ENCODE measurements at regions of chr10 and their contacts with region 1.

Region 1: DNA sequence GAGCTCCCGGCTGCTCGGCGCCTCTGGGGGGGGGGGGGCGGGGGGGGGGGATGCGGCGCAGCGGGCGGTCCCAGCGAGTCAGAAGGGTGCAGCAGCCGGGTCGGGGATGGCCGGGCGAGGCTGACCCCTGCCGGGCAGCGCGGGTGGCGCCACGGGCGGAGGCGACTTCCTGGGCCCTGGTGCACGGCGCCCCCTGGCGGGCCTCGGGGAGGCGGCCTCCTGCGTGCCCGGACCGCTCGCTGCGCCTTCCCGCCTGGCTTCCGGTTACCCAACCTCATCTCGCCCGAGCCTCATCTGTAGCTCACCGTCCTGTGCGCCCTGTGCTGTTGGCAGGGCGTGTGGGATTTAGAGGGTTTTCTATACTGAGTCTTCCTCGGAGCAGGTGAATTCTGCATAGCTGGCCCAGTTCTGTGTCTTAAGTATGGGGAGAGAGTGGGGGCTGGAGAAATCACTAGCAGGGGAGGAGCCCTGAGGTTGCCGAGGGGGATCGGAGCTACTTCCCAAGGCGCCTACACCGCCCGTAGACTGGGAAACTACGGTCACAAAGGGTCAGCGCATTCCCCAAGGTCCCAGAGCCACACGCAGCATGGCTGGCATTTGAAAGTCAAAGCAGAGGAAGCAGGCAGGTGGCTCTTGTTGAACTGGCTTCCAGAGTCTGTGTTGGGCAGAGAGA is 28.3 kb upstream of the WDFY4 start:
- DNase-seq: peak; percentile 89 to 90
- ATAC-seq: peak; percentile 96 to 98 (median 97)
- H3K4me3 ChIP-seq: peak overlapping the region; percentile 24
- H3K4me3 Mint-ChIP-seq: peak overlapping the region; percentile 86
- H3K27ac ChIP-seq: no peak overlapping the region
- H3K27ac Mint-ChIP-seq: peak overlapping the region in 1 of 2 donors; percentile 27
- H3K4me1 ChIP-seq: peaks cover 17% of the 10 kb centered on the region
- H3K4me1 Mint-ChIP-seq: peaks cover 11% of the 10 kb centered on the region in 2 donors
- H3K27me3 ChIP-seq: peaks cover 8% of the 10 kb centered on the region
- H3K27me3 Mint-ChIP-seq: peaks cover 17 to 34% of the 10 kb centered on the region in 2 donors
- CTCF ChIP-seq: peak; percentile 85

Region 2: DNA sequence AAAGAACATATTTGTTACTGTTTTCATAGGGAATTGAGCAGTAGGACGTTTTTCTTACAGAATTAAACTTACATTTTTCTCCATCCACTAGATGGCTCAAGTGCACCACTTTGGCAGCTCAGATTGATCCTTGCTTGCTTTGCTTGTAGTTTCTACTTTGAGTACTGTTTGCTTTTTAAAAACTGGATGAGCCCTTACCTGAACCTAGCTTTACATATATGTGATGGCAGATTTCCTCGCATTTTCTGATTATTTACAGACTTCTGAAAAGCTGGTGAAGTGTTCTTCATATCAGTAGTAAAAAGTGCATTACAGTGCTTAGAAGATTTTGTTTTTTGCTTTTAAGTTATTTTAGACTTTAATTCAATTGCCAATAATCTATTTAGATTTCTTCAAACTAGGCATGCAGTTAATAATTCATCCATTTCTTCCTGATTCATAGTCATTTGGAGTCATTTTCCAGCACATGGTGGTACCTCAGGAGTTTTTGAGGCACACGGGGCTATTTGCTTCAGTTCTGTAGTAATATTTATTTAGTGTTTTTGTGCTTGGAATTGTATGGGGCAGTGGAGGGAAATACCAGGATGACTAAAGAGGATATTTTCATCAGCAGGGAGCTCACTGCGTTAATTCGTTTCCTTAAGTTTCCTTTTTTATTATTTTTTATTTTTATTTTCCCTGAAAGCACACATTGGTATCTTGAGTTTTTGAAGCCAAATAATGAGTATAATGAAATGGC is 292.6 kb before region 1 on chr10:
- intact Hi-C with region 1: loop called (anchors 1 kb)
- DNase-seq: peak in 1 of 2 donors; percentile 66
- ATAC-seq: peak in 2 of 3 donors; percentile 53 to 58
- H3K4me3 ChIP-seq: no peak overlapping the region
- H3K4me3 Mint-ChIP-seq: no peak overlapping the region
- H3K27ac ChIP-seq: no peak overlapping the region
- H3K27ac Mint-ChIP-seq: peak overlapping the region in 1 of 2 donors; percentile 26
- H3K4me1 ChIP-seq: no peaks in the 10 kb centered on the region
- H3K4me1 Mint-ChIP-seq: peaks cover 23 to 35% of the 10 kb centered on the region in 2 donors
- H3K27me3 ChIP-seq: no peaks in the 10 kb centered on the region
- H3K27me3 Mint-ChIP-seq: no peaks in the 10 kb centered on the region
- CTCF ChIP-seq: peak; percentile 58

Region 3: GRCh38 chr10:48678041-48678440 is 21.7 kb after region 1 on chr10:
- intact Hi-C with region 1: no loop called
- DNase-seq: no peak
- ATAC-seq: no peak
- H3K4me3 ChIP-seq: no peak overlapping the region
- H3K4me3 Mint-ChIP-seq: no peak overlapping the region
- H3K27ac ChIP-seq: no peak overlapping the region
- H3K27ac Mint-ChIP-seq: no peak overlapping the region
- H3K4me1 ChIP-seq: peaks cover under 1% of the 10 kb centered on the region
- H3K4me1 Mint-ChIP-seq: no peaks in the 10 kb centered on the region
- H3K27me3 ChIP-seq: no peaks in the 10 kb centered on the region
- H3K27me3 Mint-ChIP-seq: peaks cover 0 to 5% of the 10 kb centered on the region in 2 donors
- CTCF ChIP-seq: no peak

Region 4: GRCh38 chr10:49164559-49165188 is 508.3 kb after region 1 on chr10:
- intact Hi-C with region 1: loop called (anchors 10 kb)
- DNase-seq: peak; percentile 38 to 52
- ATAC-seq: peak; percentile 74 to 97 (median 95)
- H3K4me3 ChIP-seq: no peak overlapping the region
- H3K4me3 Mint-ChIP-seq: no peak overlapping the region
- H3K27ac ChIP-seq: no peak overlapping the region
- H3K27ac Mint-ChIP-seq: peak overlapping the region in 1 of 2 donors; percentile 16
- H3K4me1 ChIP-seq: peaks cover 7% of the 10 kb centered on the region
- H3K4me1 Mint-ChIP-seq: peaks cover 14 to 15% of the 10 kb centered on the region in 2 donors
- H3K27me3 ChIP-seq: no peaks in the 10 kb centered on the region
- H3K27me3 Mint-ChIP-seq: peaks cover 0 to 4% of the 10 kb centered on the region in 2 donors
- CTCF ChIP-seq: peak; percentile 71

Region 5: DNA sequence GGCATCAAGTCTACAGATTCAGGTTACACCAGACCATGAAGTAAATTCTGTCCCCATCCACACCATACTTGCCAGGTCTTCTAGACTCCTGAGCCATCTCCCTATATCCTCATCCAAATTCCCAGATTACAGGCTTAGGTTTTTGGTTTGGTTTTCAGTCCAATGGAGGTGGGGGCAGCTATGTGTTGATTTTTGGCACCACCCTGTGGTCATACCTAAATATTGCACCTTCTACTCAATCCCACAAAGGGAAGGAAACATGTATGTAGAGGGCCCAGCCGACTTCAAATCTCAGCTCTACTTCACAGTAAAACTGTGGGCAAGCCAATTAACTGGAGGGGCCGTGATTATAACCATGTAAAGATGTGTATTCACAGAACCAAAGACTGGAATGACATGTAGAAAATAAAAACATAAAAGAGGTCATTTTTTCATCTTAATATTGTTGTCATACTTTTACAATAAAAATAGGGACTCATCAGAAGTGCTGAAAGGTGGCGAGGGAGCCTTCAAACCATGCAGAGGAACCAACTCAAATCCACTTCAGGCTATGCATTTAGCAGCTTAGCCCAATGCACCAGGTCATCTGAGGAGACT is 862.7 kb after region 1 on chr10:
- intact Hi-C with region 1: loop called (anchors 2 kb)
- DNase-seq: peak in 1 of 2 donors; percentile 72
- ATAC-seq: peak; percentile 79 to 84 (median 82)
- H3K4me3 ChIP-seq: no peak overlapping the region
- H3K4me3 Mint-ChIP-seq: no peak overlapping the region
- H3K27ac ChIP-seq: no peak overlapping the region
- H3K27ac Mint-ChIP-seq: no peak overlapping the region
- H3K4me1 ChIP-seq: no peaks in the 10 kb centered on the region
- H3K4me1 Mint-ChIP-seq: peaks cover 9% of the 10 kb centered on the region in 2 donors
- H3K27me3 ChIP-seq: no peaks in the 10 kb centered on the region
- H3K27me3 Mint-ChIP-seq: no peaks in the 10 kb centered on the region
- CTCF ChIP-seq: peak; percentile 77

Measured in natural killer cell (primary cell).